ENCODE measurements at regions of chr6 and their contacts with region 1.

Region 1: GRCh38 chr6:45922728-45923351 is 92.8 kb downstream of the CLIC5 start:
- DNase-seq: peak; percentile 22 to 70 (median 51)
- ATAC-seq: no peak
- H3K4me3 ChIP-seq: no peak overlapping the region
- H3K4me3 Mint-ChIP-seq: no peak overlapping the region
- H3K27ac ChIP-seq: no peak overlapping the region
- H3K27ac Mint-ChIP-seq: no peak overlapping the region
- H3K4me1 ChIP-seq: no peaks in the 10 kb centered on the region
- H3K4me1 Mint-ChIP-seq: peaks cover 4% of the 10 kb centered on the region
- H3K27me3 ChIP-seq: no peaks in the 10 kb centered on the region
- H3K27me3 Mint-ChIP-seq: no peaks in the 10 kb centered on the region
- CTCF ChIP-seq: peak; percentile 38

Region 2: GRCh38 chr6:44593539-44593944 is 1329.3 kb before region 1 on chr6:
- CTCF ChIA-PET with region 1: interaction called, 8 read pairs
- POLR2A ChIA-PET with region 1: no interaction called
- intact Hi-C with region 1: loop called in 1 of 2 experiments (anchors 1 kb)
- DNase-seq: peak; percentile 25 to 73 (median 65)
- ATAC-seq: peak; percentile 56
- H3K4me3 ChIP-seq: no peak overlapping the region
- H3K4me3 Mint-ChIP-seq: no peak overlapping the region
- H3K27ac ChIP-seq: no peak overlapping the region
- H3K27ac Mint-ChIP-seq: no peak overlapping the region
- H3K4me1 ChIP-seq: no peaks in the 10 kb centered on the region
- H3K4me1 Mint-ChIP-seq: peaks cover 2% of the 10 kb centered on the region
- H3K27me3 ChIP-seq: no peaks in the 10 kb centered on the region
- H3K27me3 Mint-ChIP-seq: peaks cover 7% of the 10 kb centered on the region
- CTCF ChIP-seq: peak; percentile 59

Region 3: GRCh38 chr6:47047479-47048407 is 1124.9 kb after region 1 on chr6:
- CTCF ChIA-PET with region 1: no interaction called
- POLR2A ChIA-PET with region 1: no interaction called
- intact Hi-C with region 1: loop called in 1 of 2 experiments (anchors 10 kb)
- DNase-seq: peak in 5 of 9 experiments; percentile 1 to 42 (median 16)
- ATAC-seq: no peak
- H3K4me3 ChIP-seq: no peak overlapping the region
- H3K4me3 Mint-ChIP-seq: no peak overlapping the region
- H3K27ac ChIP-seq: no peak overlapping the region
- H3K27ac Mint-ChIP-seq: no peak overlapping the region
- H3K4me1 ChIP-seq: no peaks in the 10 kb centered on the region
- H3K4me1 Mint-ChIP-seq: peaks cover 3% of the 10 kb centered on the region
- H3K27me3 ChIP-seq: no peaks in the 10 kb centered on the region
- H3K27me3 Mint-ChIP-seq: peaks cover 8% of the 10 kb centered on the region
- CTCF ChIP-seq: peak; percentile 46

Measured in CD8-positive, alpha-beta T cell (primary cell).